Activated B cell treated with CpG ODN at 0.5 μM for 24 hours (primary cell): ENCODE measurements at regions of chr18 and their contacts with region 1.

Region 1: GRCh38 chr18:1133541-1133940 is 228.9 kb downstream of the ADCYAP1 start:
- DNase-seq: no peak
- ATAC-seq: no peak
- H3K4me3 Mint-ChIP-seq: no peak overlapping the region
- H3K27ac Mint-ChIP-seq: no peak overlapping the region
- H3K4me1 Mint-ChIP-seq: no peaks in the 10 kb centered on the region
- H3K27me3 Mint-ChIP-seq: no peaks in the 10 kb centered on the region
- CTCF ChIP-seq: no peak

Region 2: DNA sequence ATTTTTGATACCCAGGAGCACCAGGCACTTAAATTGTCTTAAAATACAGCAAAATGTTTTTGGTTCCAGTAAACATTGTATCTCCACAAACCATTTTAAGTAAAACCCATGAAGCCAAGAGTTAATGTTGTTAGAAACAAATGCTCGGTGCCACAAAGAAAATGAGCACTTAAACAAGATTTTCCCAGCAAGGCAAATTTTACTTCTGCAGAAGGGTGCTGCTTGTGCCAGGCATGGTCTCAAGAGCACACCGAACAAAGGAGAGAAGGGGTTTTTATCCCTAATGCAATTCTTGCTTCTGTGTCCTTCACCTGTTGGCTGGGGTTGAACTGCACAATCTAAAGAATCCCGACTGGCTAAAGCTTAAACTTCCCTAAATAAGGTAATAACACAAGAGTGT is 57.8 kb after region 1 on chr18:
- CTCF ChIA-PET with region 1: no interaction called
- POLR2A ChIA-PET with region 1: no interaction called
- intact Hi-C with region 1: loop called (anchors 10 kb)
- DNase-seq: no peak
- ATAC-seq: no peak
- H3K4me3 Mint-ChIP-seq: no peak overlapping the region
- H3K27ac Mint-ChIP-seq: no peak overlapping the region
- H3K4me1 Mint-ChIP-seq: no peaks in the 10 kb centered on the region
- H3K27me3 Mint-ChIP-seq: no peaks in the 10 kb centered on the region
- CTCF ChIP-seq: no peak

Region 3: DNA sequence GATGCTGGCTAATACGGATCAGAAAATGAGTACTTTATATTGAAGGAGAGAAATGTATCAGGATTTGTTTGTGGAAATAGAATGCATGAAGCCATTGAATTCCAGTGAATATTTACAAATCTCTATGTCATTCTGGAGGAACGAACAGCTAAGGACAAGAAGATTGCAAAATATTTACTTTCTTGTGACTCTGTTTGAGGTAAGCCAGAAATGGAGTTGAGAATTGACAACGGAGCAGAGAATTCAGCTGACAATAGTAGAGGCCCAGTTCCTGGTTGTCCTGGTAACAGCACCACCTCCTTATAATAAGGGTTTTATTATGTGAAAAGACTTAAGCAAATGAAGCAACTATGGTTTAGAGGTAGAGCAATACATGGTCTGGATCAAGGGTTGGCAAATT is 120.3 kb after region 1 on chr18:
- CTCF ChIA-PET with region 1: no interaction called
- POLR2A ChIA-PET with region 1: no interaction called
- intact Hi-C with region 1: no loop called
- DNase-seq: no peak
- ATAC-seq: no peak
- H3K4me3 Mint-ChIP-seq: no peak overlapping the region
- H3K27ac Mint-ChIP-seq: no peak overlapping the region
- H3K4me1 Mint-ChIP-seq: no peaks in the 10 kb centered on the region
- H3K27me3 Mint-ChIP-seq: no peaks in the 10 kb centered on the region
- CTCF ChIP-seq: no peak

Region 4: GRCh38 chr18:1370552-1370951 is 237.0 kb after region 1 on chr18:
- CTCF ChIA-PET with region 1: no interaction called
- POLR2A ChIA-PET with region 1: no interaction called
- intact Hi-C with region 1: no loop called
- DNase-seq: no peak
- ATAC-seq: no peak
- H3K4me3 Mint-ChIP-seq: no peak overlapping the region
- H3K27ac Mint-ChIP-seq: no peak overlapping the region
- H3K4me1 Mint-ChIP-seq: no peaks in the 10 kb centered on the region
- H3K27me3 Mint-ChIP-seq: no peaks in the 10 kb centered on the region
- CTCF ChIP-seq: no peak